PC-9 (cell line): ENCODE measurements at regions of chr2 and their contacts with region 1.

Region 1: GRCh38 chr2:174577967-174578589 is 19.5 kb downstream of the WIPF1 start:
- DNase-seq: peak in 1 of 2 experiments; percentile 19
- H3K4me3 ChIP-seq: no peak overlapping the region
- H3K27ac ChIP-seq: no peak overlapping the region
- H3K4me1 ChIP-seq: no peaks in the 10 kb centered on the region
- H3K27me3 ChIP-seq: no peaks in the 10 kb centered on the region
- CTCF ChIP-seq: peak; percentile 62

Region 2: GRCh38 chr2:174615871-174616436 is 37.9 kb after region 1 on chr2:
- CTCF ChIA-PET with region 1: no interaction called
- POLR2A ChIA-PET with region 1: no interaction called
- intact Hi-C with region 1: no loop called
- DNase-seq: no peak
- H3K4me3 ChIP-seq: no peak overlapping the region
- H3K27ac ChIP-seq: no peak overlapping the region
- H3K4me1 ChIP-seq: peaks cover 22% of the 10 kb centered on the region
- H3K27me3 ChIP-seq: no peaks in the 10 kb centered on the region
- CTCF ChIP-seq: no peak

Region 3: DNA sequence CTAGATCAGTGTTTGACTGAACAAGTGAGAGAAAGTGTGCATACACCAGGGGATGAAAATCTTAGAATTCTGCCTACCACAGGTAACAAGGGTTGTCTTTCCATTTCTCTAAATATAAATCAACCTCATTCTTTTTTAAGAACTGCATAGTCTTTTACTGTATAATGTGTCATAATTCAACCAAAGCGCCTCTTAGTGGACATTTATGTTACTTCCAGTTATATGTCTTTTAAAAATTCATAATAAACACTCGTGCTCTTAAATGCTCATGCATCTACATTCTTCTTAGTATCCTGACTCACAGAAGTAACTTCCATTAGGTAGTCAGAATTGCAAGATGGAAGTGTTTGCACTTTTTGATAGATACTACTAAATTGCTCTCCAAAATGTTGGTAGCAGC is 110.0 kb after region 1 on chr2:
- CTCF ChIA-PET with region 1: interaction called, 3 read pairs
- POLR2A ChIA-PET with region 1: no interaction called
- intact Hi-C with region 1: loop called (anchors 2 kb)
- DNase-seq: no peak
- H3K4me3 ChIP-seq: no peak overlapping the region
- H3K27ac ChIP-seq: no peak overlapping the region
- H3K4me1 ChIP-seq: no peaks in the 10 kb centered on the region
- H3K27me3 ChIP-seq: no peaks in the 10 kb centered on the region
- CTCF ChIP-seq: peak; percentile 68

Region 4: DNA sequence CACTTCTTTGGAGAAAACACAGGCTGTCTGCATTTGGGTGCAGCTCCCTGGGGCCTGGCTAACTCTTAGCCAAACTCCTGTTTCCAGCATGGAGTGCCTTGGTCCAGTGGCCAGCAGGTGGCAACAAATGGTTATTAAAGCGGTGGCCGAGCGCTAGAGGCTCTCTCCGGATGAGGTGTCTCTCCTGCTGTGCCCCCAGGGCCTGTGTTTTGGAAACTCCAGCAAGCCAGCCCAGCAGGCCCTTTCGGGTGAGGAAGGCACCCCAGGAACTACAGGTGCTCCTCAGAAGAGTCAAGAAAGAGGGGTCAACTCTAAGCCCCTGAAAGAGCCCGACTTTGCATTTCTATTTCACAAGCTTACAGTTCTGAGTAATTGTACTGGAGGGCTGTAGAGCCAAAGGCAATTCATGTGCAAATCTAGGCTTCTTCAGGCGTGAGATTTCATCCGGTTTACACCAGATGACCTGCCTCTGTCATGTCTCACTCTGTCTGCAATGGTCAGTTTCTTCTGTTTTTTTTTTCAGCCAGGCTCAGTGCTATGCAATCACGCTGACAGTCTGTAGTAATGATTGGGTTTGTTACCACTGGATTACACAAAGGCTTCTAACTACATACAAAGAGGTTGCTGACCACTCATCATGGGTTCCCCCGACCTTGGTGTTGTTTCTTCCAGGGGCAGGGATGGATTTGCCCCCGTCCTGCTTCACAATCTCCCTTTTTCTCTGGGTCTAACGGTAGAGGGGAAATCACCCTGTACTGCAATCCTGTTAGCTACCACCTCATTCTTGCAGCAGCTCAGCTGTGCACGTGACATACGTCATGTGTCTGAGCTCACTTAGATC is 193.8 kb after region 1 on chr2:
- CTCF ChIA-PET with region 1: interaction called, 10 read pairs
- POLR2A ChIA-PET with region 1: no interaction called
- intact Hi-C with region 1: no loop called
- DNase-seq: peak; percentile 70 to 82
- H3K4me3 ChIP-seq: no peak overlapping the region
- H3K27ac ChIP-seq: no peak overlapping the region
- H3K4me1 ChIP-seq: 0 out of 2 replicates have a peak, but pooled peaks cover 3% of the 10 kb centered on the region
- H3K27me3 ChIP-seq: no peaks in the 10 kb centered on the region
- CTCF ChIP-seq: peak; percentile 97